ENCODE measurements at regions of chr6 and their contacts with region 1.

Region 1: GRCh38 chr6:138088330-138088766 is 18.9 kb downstream of the PERP start:
- DNase-seq: peak; percentile 87
- ATAC-seq: peak; percentile 78
- H3K4me3 ChIP-seq: peak overlapping the region; percentile 48
- H3K27ac ChIP-seq: peak overlapping the region; percentile 74
- H3K4me1 ChIP-seq: peaks cover 36% of the 10 kb centered on the region
- H3K27me3 ChIP-seq: no peaks in the 10 kb centered on the region
- CTCF ChIP-seq: no peak

Region 2: DNA sequence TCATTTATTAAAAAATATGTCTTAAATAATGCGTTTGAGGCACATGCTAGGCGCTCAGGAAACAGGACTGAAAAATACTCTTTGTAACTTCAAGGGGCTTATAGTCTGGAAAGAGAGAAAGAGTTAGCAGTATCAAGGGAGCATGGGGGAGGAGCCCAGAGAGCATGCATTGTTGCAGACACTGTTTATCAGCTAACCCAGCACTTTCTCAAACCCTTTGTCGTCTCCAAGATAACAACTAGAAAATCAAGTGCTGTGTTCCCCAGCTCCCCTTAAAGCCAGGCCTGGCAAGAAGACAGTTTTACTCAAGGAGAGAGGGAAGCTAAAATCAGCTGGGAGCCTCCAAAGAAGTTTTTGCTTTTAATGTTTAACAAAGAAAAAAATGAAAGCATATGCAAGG is 79.6 kb before region 1 on chr6:
- CTCF ChIA-PET with region 1: interaction called, 3 read pairs
- POLR2A ChIA-PET with region 1: no interaction called
- intact Hi-C with region 1: loop called (anchors 1 kb)
- DNase-seq: no peak
- ATAC-seq: no peak
- H3K4me3 ChIP-seq: no peak overlapping the region
- H3K27ac ChIP-seq: no peak overlapping the region
- H3K4me1 ChIP-seq: peaks cover 5% of the 10 kb centered on the region
- H3K27me3 ChIP-seq: no peaks in the 10 kb centered on the region
- CTCF ChIP-seq: no peak